ENCODE measurements at regions of chr19 and their contacts with region 1.

Region 1: DNA sequence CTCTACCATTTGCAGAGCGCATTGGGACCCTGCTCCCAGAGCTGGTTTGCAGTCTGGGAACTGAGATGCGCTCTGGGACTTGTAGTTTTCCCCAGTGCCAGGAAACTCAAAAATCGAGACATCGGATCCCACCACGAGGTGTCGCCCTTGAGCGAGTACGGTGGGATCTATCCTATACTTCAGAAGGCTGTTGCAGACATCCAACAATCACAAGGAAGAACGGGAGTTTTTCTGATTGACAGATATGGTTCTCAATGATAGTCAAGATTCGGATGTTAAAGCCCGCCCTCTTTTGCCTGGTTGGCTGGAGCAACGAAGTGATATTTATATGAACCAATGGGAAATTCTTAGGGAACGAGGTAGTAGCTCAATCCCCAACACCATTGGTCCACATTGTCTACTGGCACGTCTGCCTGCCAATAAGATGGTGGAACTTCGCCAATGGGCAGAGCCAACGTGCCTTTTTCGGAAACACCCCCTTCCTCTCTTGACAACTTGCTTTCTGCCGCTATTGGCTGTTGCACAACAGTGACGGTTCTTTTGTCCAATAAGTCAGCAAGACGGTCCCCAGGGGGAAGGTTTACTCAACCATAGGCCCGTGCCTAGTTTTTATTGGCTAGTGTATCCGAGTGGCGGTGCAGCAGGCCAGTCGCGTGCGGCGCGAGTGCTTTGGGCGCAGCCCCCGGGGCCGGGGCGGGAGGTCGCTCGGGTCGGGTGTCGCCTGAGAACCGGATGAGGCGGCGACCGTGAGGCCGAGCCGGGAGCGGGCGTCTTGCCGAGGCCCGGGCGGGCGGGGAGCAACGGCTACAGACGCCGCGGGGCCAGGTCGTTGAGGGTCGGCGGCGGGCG is at the start of gene DNM2:
- DNase-seq: peak; percentile 99
- H3K4me3 ChIP-seq: peak within 1 kb of the TSS; percentile 93 to 100
- H3K27ac ChIP-seq: peak within 1 kb of the TSS; percentile 84 to 94
- H3K4me1 ChIP-seq: peaks cover 23% of the 10 kb centered on the region
- H3K27me3 ChIP-seq: no peaks in the 10 kb centered on the region
- CTCF ChIP-seq: peak; percentile 77 to 97 (median 94)
- POLR2A ChIP-seq: no peak
- total RNA-seq, gene DNM2: 226 to 274 TPM

Region 2: DNA sequence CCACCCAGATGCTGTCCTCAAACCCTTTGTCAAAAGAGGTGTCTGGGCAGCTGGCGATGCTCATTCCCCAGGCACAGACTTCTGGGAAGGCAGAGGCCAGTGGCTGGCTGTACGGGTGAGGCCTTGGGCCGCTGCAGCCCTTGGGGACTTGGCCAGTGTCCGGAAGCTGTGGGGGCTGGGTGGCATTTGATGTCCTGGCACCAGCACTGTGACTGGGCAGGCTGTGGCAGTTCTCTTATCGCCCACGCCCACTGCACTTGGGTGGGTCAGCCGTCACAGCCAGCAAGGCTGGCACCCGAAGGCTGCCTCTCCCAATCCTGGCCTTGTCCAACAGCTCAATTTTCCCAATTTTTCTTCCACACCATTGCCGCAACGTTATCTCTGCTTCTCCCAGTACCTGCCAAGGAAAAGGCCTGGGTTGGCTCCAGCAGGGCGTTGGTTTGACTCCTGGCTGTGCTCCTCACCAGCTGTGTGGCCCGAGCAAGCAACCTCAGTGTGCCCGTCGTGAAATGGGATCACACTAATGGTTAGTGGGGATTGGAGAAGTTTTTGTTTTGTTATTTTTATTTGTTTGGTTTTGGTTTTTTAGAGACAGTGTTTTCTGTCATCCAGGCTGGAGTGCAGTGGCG is 105.0 kb before region 1 on chr19:
- intact Hi-C with region 1: no loop called
- DNase-seq: peak; percentile 94
- H3K4me3 ChIP-seq: no peak overlapping the region
- H3K27ac ChIP-seq: peak overlapping the region; percentile 59 to 72
- H3K4me1 ChIP-seq: peaks cover 37% of the 10 kb centered on the region
- H3K27me3 ChIP-seq: no peaks in the 10 kb centered on the region
- CTCF ChIP-seq: no peak
- POLR2A ChIP-seq: no peak

Region 3: DNA sequence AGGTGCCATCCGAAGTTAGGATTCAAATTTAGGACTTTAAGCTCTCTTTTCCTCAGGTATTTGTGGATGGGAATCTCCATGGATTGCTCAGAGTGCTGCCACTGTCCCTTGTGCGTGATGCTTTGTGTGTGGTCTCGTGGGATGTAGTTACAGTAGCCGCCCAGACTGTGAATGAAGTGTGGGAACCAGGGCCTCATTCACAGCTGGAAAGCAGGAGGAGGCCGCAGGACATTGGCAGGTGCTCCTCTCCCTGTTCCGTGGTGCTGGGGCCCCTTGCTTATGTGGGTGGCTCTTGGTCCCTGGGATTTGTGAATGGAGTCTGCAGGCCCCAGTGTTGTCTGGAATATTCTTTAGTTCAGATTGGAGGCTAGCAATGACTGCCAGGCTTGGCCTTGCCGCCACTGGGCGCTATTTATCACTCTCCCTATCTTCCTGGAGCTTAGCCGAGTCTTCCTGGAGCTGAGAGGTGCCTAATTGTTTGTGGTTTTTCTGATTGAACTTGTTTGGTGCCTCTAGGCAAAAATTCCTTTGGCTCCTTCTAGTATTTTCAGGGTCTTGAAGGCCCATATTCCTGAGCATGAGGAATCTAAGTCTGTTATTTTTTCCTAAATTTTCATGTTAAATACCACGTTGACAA is 61.8 kb before region 1 on chr19:
- intact Hi-C with region 1: no loop called
- DNase-seq: peak; percentile 38
- H3K4me3 ChIP-seq: peak overlapping the region; percentile 98 to 100
- H3K27ac ChIP-seq: peak overlapping the region; percentile 100
- H3K4me1 ChIP-seq: peaks cover 28% of the 10 kb centered on the region
- H3K27me3 ChIP-seq: no peaks in the 10 kb centered on the region
- CTCF ChIP-seq: no peak
- POLR2A ChIP-seq: no peak

Region 4: GRCh38 chr19:10769533-10770491 is 52.2 kb after region 1 on chr19:
- intact Hi-C with region 1: loop called (anchors 5 kb)
- DNase-seq: peak; percentile 89
- H3K4me3 ChIP-seq: no peak overlapping the region
- H3K27ac ChIP-seq: peak overlapping the region; percentile 83 to 86
- H3K4me1 ChIP-seq: peaks cover 56% of the 10 kb centered on the region
- H3K27me3 ChIP-seq: no peaks in the 10 kb centered on the region
- CTCF ChIP-seq: peak; percentile 14 to 40 (median 38)
- POLR2A ChIP-seq: no peak

Region 5: DNA sequence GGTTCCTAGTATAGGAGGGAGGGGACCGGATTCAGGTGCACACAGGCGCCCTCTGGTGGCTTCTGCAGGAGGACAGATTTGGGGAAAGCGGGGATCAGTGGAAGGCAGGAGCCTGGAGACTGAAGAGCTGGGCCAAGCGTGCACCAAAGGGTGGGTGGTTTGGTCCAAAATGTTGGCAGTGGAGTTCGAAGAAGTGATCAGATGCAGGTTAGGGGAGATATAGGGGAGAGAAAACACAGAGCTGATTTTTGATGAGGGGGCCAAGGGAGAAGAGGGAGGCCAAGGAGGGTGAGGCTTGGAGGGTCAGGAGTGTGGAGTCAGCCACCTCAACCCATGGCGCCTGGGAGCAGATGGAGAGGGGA is 146.9 kb after region 1 on chr19:
- intact Hi-C with region 1: loop called (anchors 5 kb)
- DNase-seq: peak; percentile 89
- H3K4me3 ChIP-seq: no peak overlapping the region
- H3K27ac ChIP-seq: peak overlapping the region in 1 of 2 donors; percentile 30
- H3K4me1 ChIP-seq: no peaks in the 10 kb centered on the region
- H3K27me3 ChIP-seq: no peaks in the 10 kb centered on the region
- CTCF ChIP-seq: peak; percentile 60 to 91 (median 78)
- POLR2A ChIP-seq: no peak